GM10248 (cell line): ENCODE measurements at regions of chr20 and their contacts with region 1.

Region 1: DNA sequence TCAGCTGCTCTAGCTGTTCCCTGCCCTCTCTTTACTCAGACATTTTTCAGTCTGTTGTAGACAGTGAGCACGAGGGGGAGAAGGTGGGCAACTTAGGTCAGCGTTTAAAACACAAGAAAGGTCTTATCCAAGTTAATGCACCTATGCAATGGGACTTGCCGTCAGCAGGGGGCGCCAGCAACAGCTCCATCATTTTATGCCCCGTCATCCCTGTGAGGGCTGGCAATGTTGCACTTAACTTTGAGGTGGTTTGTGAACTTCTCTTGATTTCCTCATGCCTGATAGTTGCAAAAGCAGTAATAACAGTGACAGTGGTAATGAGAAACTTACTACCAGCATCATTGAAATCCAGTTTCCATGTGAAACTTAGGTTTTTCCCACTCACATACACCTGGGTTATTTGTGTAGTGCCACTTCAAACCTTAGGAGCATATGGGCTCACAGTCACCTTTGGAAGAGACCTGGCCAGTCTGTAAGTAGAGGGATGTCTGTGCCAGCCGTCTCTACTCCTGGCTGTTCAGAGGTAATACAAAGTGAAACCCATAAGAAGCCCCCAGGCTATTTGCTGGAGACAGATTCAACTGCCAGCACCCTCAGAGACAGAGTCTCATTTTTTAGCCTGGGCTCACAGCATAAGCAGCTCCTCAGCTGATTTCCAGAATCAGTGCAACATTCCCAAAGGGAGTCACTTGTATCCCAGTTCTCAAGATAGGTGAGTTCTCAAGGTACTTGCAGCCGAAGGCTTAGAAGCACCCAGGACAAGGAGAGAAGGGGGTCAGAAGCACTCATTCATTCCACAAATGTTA is 44.8 kb upstream of the ID1 start:
- DNase-seq: peak; percentile 71
- CTCF ChIP-seq: peak; percentile 87

Region 2: DNA sequence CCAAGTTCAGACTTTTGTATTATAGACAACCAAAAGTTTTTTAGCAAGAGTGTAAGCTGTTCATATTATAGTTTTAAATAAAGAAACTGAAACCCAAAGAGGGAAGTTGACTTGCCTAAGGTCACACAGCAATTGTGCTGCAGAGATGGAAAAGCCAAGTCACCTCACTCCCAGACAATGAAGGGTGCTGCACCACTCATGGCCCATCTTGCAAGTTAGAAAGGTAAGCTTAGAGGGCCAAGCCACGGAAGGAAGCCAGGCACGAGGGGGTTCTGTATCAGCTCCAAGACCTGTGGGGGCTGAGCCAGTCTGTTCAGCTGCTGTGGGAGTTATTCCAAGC is 86.2 kb before region 1 on chr20:
- CTCF ChIA-PET with region 1: no interaction called
- POLR2A ChIA-PET with region 1: no interaction called
- DNase-seq: peak; percentile 46
- CTCF ChIP-seq: no peak

Region 3: DNA sequence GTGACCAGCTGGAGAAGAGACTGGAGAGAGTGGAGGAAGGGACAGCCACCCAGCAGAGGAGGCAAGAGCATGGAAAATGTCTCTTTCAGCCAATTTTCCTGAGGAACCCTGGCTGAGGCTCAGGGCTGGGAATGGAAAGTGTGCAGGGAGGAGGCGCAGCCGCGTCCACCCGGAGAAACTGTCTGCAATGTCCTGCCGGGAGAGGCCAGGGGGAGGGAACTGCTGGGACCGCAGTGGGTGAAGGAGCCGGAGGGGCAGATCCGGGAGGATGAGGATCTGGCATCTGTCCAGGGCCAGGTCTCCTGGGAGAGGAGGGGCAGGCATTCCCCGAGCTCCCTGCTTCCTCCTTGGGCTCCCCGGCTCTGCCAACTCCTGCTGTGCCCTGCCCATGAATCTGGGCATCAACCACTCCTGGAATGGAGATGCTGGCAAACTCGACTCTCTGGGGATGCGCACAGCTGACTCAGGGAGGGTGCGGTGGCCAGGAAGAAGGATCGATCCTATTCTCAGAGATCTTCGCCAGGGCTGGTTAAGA is 63.5 kb before region 1 on chr20:
- CTCF ChIA-PET with region 1: no interaction called
- POLR2A ChIA-PET with region 1: no interaction called
- DNase-seq: no peak
- CTCF ChIP-seq: no peak

Region 4: GRCh38 chr20:31547017-31547675 is 13.2 kb before region 1 on chr20:
- CTCF ChIA-PET with region 1: interaction called, 260 read pairs
- POLR2A ChIA-PET with region 1: no interaction called
- DNase-seq: peak; percentile 85
- CTCF ChIP-seq: no peak

Region 5: DNA sequence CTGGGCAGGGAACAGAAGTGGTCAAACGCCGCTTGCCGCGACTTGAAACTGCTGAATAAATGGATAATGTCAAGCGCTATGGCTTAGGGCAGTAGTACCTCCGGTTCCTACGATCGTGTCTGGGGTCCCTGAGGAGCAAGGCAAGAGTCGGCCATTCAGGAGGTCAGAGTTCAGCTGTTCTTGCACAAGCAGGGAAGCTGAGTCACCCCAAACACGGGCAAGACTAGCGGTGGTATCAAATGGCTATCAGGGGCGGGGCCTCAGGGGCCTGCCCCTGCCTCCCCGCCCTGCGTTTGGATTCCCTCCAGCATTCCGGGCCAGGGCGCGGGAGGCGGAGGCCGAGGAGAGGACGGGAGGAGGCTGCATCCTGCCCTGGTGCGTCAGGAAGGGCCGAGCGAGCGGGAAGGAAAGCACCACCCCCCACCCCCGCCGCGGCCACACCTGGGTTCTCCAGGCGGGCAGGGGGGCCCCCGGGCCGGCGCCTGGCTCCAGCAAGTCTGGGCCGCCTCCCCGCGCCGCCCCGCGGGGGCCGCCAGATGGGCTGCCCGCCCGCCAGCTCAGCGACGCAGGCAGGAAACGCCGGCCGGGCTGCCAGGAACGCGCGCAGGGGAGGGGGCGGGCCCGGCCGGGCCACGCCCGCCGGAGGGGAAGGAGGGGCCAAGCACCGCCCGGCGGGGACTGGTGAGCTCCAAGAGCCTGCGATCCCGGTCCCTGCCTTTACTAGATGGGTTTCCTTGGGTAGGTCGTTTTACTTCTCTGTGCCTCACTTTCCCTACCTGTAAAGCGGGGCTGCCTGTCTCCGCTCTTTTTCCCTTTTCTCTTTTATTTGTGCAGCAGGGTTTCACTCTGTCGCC is 12.6 kb after region 1 on chr20:
- CTCF ChIA-PET with region 1: interaction called, 260 read pairs
- POLR2A ChIA-PET with region 1: interaction called, 4 read pairs
- DNase-seq: peak; percentile 93
- CTCF ChIP-seq: no peak

Region 6: DNA sequence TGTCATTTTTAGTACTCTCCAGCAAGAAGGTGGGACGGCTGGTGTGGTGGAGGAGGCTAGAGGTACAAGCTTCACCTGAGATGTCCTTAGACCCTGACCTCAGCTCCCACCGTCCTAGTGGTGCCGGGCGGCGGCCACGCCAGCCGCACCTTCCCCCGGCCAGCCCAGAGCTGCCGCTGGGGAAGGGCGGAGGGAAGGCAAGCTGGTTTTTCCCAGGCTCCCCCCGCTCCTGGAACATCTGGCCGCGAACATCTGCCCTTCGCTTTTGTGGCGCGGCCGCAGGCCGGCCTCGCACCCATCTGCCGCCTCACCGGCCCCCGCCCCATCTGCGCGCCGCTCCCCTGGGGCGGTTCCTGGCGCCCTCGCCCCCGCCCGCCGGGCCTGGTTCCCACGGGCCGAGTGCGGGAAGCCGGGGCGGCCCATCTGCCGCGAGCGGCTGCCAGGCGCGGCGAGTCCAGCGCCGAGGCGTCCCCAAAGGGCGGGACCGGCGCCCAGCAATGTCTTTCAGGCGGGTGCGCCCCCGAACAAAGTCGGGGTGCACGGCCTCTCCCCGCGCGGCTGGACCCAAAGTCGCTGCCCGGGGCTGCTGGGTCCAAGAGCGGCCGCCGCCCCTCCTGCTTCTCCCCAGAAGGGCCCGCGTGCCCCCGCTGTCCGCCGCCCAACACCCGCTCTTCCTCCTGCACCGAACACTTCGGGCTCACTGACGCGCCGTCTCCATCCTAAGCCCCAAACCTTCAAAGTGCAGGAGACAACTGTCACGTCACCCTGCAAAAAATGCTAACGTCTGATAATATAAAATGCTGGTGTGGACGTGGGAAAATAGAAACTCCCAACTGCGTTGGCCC is 27.5 kb after region 1 on chr20:
- CTCF ChIA-PET with region 1: interaction called, 10 read pairs
- POLR2A ChIA-PET with region 1: no interaction called
- DNase-seq: peak; percentile 53
- CTCF ChIP-seq: no peak

Region 7: DNA sequence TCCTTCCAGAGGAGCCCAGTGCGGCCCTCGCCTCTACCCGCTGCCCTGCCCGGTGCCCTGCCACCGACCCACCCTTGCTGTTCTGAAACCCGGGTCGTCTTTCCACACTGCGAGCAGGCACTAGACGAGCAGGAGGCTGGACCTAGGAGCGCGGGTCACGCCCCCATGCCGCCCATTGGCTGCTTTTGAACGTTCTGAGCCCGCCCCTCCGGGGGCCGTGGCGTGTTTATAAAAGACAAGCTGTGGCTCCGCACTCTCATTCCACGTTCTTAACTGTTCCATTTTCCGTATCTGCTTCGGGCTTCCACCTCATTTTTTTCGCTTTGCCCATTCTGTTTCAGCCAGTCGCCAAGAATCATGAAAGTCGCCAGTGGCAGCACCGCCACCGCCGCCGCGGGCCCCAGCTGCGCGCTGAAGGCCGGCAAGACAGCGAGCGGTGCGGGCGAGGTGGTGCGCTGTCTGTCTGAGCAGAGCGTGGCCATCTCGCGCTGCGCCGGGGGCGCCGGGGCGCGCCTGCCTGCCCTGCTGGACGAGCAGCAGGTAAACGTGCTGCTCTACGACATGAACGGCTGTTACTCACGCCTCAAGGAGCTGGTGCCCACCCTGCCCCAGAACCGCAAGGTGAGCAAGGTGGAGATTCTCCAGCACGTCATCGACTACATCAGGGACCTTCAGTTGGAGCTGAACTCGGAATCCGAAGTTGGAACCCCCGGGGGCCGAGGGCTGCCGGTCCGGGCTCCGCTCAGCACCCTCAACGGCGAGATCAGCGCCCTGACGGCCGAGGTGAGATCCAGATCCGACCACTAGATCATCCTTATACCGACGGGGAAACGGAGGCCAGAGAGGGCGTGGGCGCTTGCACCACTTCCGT is 45.0 kb after region 1 on chr20 and contains the start of gene ID1:
- CTCF ChIA-PET with region 1: interaction called, 642 read pairs
- POLR2A ChIA-PET with region 1: interaction called, 3 read pairs
- DNase-seq: peak; percentile 91
- CTCF ChIP-seq: no peak